Mammary epithelial cell (primary cell): ENCODE measurements at regions of chr17 and their contacts with region 1.

Region 1: GRCh38 chr17:68435876-68436842 is 21.1 kb downstream of the WIPI1 start:
- DNase-seq: peak; percentile 62
- H3K4me3 ChIP-seq: no peak overlapping the region
- H3K27ac ChIP-seq: peak overlapping the region; percentile 15
- H3K4me1 ChIP-seq: peaks cover 5% of the 10 kb centered on the region
- H3K27me3 ChIP-seq: no peaks in the 10 kb centered on the region
- CTCF ChIP-seq: peak; percentile 94 to 96

Region 2: DNA sequence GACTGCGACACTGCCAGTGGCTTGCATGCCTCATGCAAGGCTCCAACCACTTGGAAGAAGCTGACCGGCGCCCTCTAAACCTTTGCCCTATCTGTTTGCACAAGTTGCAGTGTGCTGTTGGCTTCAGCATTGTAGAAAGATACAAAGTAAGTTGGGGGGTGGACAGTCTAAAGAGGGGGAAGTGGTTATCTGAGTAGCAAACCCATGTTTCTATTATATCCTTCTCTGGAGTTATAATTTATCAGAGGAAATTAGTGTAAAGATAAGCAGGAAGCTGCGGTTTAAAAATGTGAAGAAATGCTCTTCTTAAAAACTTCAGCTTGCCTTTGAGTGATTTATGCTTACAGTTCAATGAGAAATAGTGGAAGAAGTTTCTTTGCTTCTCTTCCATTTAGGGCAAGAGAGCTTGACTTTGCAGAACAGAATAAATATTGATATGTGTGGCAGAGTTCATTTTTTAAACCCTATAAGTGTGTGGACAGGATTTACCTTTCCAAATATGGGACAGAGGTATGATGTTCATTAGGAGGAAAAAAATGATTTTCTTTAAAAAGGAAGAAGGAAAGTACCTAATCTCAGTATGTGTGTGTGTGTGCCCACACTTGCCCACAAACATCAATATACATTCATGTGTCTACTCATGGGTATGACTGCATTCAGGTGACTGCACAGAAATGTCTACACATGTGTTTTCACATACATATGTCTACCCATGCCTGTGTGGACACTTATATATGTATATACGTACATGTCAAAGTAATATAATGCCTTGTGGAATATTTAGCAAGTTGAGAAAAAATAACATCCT is 180.2 kb before region 1 on chr17:
- CTCF ChIA-PET with region 1: no interaction called
- dilution Hi-C with region 1: no loop called
- in situ Hi-C with region 1: loop called (anchors 10 kb)
- intact Hi-C with region 1: no loop called
- DNase-seq: no peak
- H3K4me3 ChIP-seq: no peak overlapping the region
- H3K27ac ChIP-seq: no peak overlapping the region
- H3K4me1 ChIP-seq: no peaks in the 10 kb centered on the region
- H3K27me3 ChIP-seq: no peaks in the 10 kb centered on the region
- CTCF ChIP-seq: no peak

Region 3: DNA sequence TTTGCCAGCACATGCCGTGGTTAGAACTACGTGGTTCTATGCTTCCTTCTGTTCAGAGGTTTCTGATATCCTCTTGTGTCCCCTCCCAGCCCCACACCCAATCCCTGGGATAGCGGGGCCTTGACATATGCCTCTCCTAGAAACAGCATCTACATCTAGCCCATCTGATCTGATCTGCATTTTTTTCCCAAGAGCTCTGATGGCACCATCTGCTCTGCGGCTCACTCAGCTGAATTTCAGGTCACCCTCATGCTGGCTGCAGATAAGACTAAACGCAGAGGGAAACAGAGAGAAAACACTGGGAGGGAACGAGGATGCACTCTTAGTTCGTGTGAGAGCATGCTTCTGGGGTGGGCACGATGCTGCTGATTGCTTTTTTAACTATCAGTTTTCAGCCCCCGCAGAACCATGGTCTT is 10.5 kb after region 1 on chr17:
- CTCF ChIA-PET with region 1: interaction called, 12 read pairs
- dilution Hi-C with region 1: no loop called
- in situ Hi-C with region 1: no loop called
- intact Hi-C with region 1: no loop called
- DNase-seq: no peak
- H3K4me3 ChIP-seq: no peak overlapping the region
- H3K27ac ChIP-seq: no peak overlapping the region
- H3K4me1 ChIP-seq: no peaks in the 10 kb centered on the region
- H3K27me3 ChIP-seq: no peaks in the 10 kb centered on the region
- CTCF ChIP-seq: no peak